IMR-90 (cell line): ENCODE measurements at regions of chr4 and their contacts with region 1.

Region 1: DNA sequence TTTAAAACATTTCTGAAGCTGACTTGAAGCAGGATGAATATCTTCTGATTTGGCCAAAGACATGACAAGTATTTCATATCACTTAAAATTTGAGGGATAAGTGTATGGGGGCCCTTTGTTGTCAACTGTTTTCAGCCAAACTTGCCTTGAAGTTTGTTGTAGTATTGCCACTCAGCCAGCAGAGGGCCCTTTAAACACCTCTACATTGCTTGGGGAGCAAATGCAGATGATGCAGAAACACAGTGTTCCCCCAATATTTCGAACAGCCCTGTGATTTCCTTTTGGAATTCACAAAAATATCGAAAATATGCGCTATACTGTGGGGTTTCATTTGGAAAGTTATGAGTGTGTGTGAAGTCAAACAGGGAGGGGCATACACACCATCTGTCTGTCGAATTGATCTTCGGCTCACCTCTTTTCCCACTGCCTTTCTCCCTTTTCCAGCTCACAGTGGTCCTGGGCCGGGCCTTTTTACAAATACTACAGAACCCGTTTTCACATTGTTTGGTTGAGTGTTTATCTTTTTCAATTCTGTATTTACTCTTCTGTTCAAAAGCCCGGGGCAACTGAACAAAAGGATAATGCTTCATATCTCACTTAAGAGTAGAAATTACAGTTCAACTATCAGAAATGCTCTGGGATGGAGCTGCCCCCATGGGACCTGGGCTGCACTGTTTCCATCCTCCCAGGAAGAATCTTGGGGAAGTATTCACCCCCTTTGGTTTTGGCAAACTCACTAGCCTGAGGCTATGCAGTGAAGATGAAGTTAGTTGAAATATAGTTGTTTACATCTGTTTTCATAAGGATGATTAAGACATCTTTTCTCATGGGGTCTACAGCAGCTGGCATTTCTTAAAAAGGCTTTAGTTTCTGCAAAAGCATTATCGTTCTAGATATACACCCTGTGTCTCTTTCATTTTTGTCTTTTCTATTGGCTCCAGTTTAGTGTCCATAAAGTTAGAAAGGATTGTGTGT is 137.6 kb downstream of the EGF start:
- DNase-seq: peak; percentile 52
- ATAC-seq: peak; percentile 78
- H3K4me3 ChIP-seq: no peak overlapping the region
- H3K27ac ChIP-seq: no peak overlapping the region
- H3K4me1 ChIP-seq: peaks cover 3% of the 10 kb centered on the region; the same call in 1 of the 2 replicates
- H3K27me3 ChIP-seq: no peaks in the 10 kb centered on the region
- CTCF ChIP-seq: peak; percentile 83
- POLR2A ChIP-seq: no peak
- RAD21 ChIP-seq: peak; percentile 84

Region 2: GRCh38 chr4:110201502-110201901 is 151.3 kb after region 1 on chr4:
- CTCF ChIA-PET with region 1: no interaction called
- POLR2A ChIA-PET with region 1: no interaction called
- dilution Hi-C with region 1: no loop called
- in situ Hi-C with region 1: loop called (anchors 5 kb)
- intact Hi-C with region 1: loop called (anchors 1 kb)
- DNase-seq: no peak
- ATAC-seq: no peak
- H3K4me3 ChIP-seq: no peak overlapping the region
- H3K27ac ChIP-seq: no peak overlapping the region
- H3K4me1 ChIP-seq: no peaks in the 10 kb centered on the region
- H3K27me3 ChIP-seq: no peaks in the 10 kb centered on the region; the same call in 1 of the 2 replicates
- CTCF ChIP-seq: no peak
- POLR2A ChIP-seq: no peak
- RAD21 ChIP-seq: no peak